Endothelial cell of umbilical vein (primary cell): ENCODE measurements at regions of chr2 and their contacts with region 1.

Region 1: GRCh38 chr2:238288650-238289573 is 502 bp upstream of the PER2 start:
- DNase-seq: peak; percentile 99
- H3K4me3 ChIP-seq: peak overlapping the region; percentile 22 to 79 (median 48)
- H3K27ac ChIP-seq: peak overlapping the region; percentile 56
- H3K4me1 ChIP-seq: peaks cover 14% of the 10 kb centered on the region
- H3K27me3 ChIP-seq: no peaks in the 10 kb centered on the region
- CTCF ChIP-seq: peak; percentile 33 to 52
- POLR2A ChIP-seq: no peak

Region 2: DNA sequence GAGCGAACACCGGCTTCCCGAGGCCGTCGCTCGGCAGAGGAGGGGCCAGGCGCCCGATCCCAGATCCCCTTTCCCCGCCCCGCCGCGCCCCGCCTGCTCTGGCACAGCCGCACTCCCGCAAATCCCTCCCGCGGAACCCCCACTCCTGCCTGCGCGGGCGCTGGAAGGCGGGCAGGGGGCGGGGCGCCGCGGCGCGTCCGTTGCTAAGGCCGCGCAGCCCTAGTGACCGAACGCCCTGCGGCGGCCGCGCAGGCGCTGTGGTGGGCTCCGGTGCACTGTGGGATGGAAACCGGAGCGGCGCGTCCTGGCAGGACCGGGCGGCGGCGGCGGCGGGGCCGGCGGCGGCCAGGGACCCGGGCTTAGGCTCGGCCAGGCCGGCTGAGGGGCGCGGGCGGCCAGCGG is 31.3 kb after region 1 on chr2 and contains the start of gene TRAF3IP1:
- CTCF ChIA-PET with region 1: no interaction called
- POLR2A ChIA-PET with region 1: no interaction called
- dilution Hi-C with region 1: no loop called
- intact Hi-C with region 1: loop called (anchors 1 kb)
- DNase-seq: peak; percentile 95
- H3K4me3 ChIP-seq: peak within 1 kb of the TSS; percentile 28 to 66 (median 63)
- H3K27ac ChIP-seq: no peak within 1 kb of the TSS
- H3K4me1 ChIP-seq: peaks cover 8% of the 10 kb centered on the region
- H3K27me3 ChIP-seq: peaks cover 2 to 3% of the 10 kb centered on the region in 2 experiments
- CTCF ChIP-seq: no peak
- POLR2A ChIP-seq: no peak
- total RNA-seq, gene TRAF3IP1: 15.0 and 15.9 TPM in 2 replicates

Region 3: DNA sequence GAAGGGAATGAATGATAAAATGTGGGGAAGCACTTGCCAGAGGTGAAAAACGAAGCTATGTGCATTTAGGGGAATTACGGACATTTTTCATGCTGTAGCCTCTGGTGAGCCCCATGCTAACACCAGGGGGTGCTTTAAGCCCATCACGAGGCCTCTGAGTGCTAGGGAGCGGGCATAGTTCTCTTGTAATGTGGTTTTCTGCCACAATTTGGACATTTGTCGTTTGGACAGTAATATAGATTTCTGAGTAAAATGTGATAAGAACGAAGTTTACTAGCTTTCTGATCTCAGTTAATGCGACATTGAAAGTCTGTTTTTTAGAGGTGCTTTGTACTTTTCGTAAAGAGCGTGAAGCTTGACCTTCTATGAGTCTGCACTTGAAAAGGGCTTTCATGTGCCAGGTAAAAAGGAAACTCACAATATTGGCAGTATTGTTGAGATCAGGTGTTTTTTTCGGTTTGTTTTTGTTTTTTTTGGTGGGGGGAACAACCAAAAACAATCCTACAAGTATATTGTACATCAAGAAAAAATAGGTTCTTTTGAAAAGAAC is 82.0 kb after region 1 on chr2:
- CTCF ChIA-PET with region 1: no interaction called
- POLR2A ChIA-PET with region 1: no interaction called
- dilution Hi-C with region 1: no loop called
- intact Hi-C with region 1: no loop called
- DNase-seq: peak; percentile 55
- H3K4me3 ChIP-seq: no peak overlapping the region
- H3K27ac ChIP-seq: no peak overlapping the region
- H3K4me1 ChIP-seq: no peaks in the 10 kb centered on the region
- H3K27me3 ChIP-seq: no peaks in the 10 kb centered on the region
- CTCF ChIP-seq: peak; percentile 77 to 78
- POLR2A ChIP-seq: no peak

Region 4: DNA sequence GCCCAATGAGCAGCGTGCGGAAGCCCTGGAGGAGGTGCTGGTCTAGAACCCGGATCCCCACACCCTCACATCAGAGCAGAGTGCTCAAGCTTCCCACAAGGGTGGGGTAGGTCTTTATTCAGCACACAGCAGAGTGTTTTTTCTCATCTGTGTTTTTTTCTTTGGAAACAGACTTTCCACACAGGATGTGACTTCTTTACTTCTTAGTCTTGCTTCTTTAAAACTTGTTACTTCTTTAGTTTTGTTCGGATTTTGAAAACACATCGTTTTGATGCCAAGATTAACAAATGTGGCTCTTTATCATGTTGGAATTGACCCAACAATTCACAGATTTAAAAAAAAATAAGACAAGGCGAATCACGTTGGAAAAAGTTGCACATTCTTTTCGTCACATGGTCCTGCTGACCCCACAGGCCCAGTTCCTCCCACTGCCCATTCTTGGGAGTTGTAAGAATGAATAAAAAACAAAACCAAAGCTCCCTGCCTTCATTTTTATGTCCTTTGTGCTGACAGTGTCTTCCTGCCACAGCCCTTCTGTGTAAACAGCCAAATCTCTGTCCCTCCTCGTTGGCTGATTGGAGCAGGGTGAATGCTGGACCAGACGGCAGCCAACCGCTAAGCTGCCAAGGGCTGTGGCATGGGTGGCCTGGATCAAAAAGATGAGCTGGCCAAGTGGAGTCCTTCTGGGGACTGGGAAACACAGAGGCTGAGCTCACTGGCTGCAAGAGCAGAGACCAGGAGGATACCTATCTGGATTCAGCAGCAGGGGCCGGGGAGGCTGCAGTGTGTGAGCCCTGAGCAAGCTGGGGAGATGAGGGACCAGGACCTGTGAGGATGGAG is 640.5 kb after region 1 on chr2:
- CTCF ChIA-PET with region 1: no interaction called
- POLR2A ChIA-PET with region 1: no interaction called
- dilution Hi-C with region 1: no loop called
- intact Hi-C with region 1: no loop called
- DNase-seq: peak; percentile 93
- H3K4me3 ChIP-seq: no peak overlapping the region
- H3K27ac ChIP-seq: no peak overlapping the region
- H3K4me1 ChIP-seq: no peaks in the 10 kb centered on the region
- H3K27me3 ChIP-seq: no peaks in the 10 kb centered on the region
- CTCF ChIP-seq: no peak
- POLR2A ChIP-seq: no peak